Left cardiac atrium (tissue), 4 donors: ENCODE measurements at regions of chr10 and their contacts with region 1.

Region 1: GRCh38 chr10:121974535-121975294 is at the start of gene NSMCE4A:
- DNase-seq: peak; percentile 89
- ATAC-seq: peak; percentile 92 to 95
- total RNA-seq, gene NSMCE4A: 31.4 to 35.8 TPM

Region 2: GRCh38 chr10:121927841-121928527 is 46.7 kb before region 1 on chr10 and contains the start of gene ATE1:
- intact Hi-C with region 1: loop called in 1 of 2 experiments (anchors 5 kb)
- DNase-seq: peak; percentile 93
- ATAC-seq: peak; percentile 97 to 98
- total RNA-seq, gene ATE1: 37.8 to 47.7 TPM

Region 3: GRCh38 chr10:122044045-122044661 is 69.4 kb after region 1 on chr10:
- intact Hi-C with region 1: loop called in 1 of 2 experiments (anchors 10 kb)
- DNase-seq: no peak
- ATAC-seq: peak; percentile 72 to 74